HCT116 (cell line): ENCODE measurements at regions of chr4 and their contacts with region 1.

Region 1: GRCh38 chr4:53196882-53197771 is 168.7 kb downstream of the SCFD2 start:
- DNase-seq: peak; percentile 70
- ATAC-seq: peak; percentile 76
- H3K4me3 ChIP-seq: no peak overlapping the region
- H3K27ac ChIP-seq: no peak overlapping the region
- H3K4me1 ChIP-seq: no peaks in the 10 kb centered on the region
- H3K27me3 ChIP-seq: no peaks in the 10 kb centered on the region
- CTCF ChIP-seq: peak; percentile 61 to 81 (median 65); a peak in 5 of 6 replicates
- POLR2A ChIP-seq: no peak
- RAD21 ChIP-seq: peak; percentile 81

Region 2: GRCh38 chr4:53592686-53593501 is 395.8 kb after region 1 on chr4:
- CTCF ChIA-PET with region 1: no interaction called
- POLR2A ChIA-PET with region 1: no interaction called
- RAD21 ChIA-PET with region 1: no interaction called
- intact Hi-C with region 1: loop called (anchors 5 kb)
- DNase-seq: no peak
- ATAC-seq: peak; percentile 80
- H3K4me3 ChIP-seq: peak overlapping the region; percentile 38 to 55
- H3K27ac ChIP-seq: peak overlapping the region; percentile 46
- H3K4me1 ChIP-seq: peaks cover 18 to 30% of the 10 kb centered on the region in 2 experiments
- H3K27me3 ChIP-seq: no peaks in the 10 kb centered on the region
- CTCF ChIP-seq: no peak
- POLR2A ChIP-seq: no peak
- RAD21 ChIP-seq: no peak

Region 3: GRCh38 chr4:53614591-53614990 is 417.5 kb after region 1 on chr4:
- CTCF ChIA-PET with region 1: no interaction called
- POLR2A ChIA-PET with region 1: no interaction called
- RAD21 ChIA-PET with region 1: no interaction called
- intact Hi-C with region 1: loop called (anchors 10 kb)
- DNase-seq: no peak
- ATAC-seq: peak; percentile 64
- H3K4me3 ChIP-seq: no peak overlapping the region
- H3K27ac ChIP-seq: no peak overlapping the region
- H3K4me1 ChIP-seq: no peaks in the 10 kb centered on the region
- H3K27me3 ChIP-seq: 0 out of 2 replicates have a peak, but pooled peaks cover 7% of the 10 kb centered on the region
- CTCF ChIP-seq: peak in 2 of 3 experiments; percentile 32; a peak in 4 of 6 replicates
- POLR2A ChIP-seq: no peak
- RAD21 ChIP-seq: peak; percentile 15; the same call in 1 of the 2 replicates

Region 4: GRCh38 chr4:53804719-53805118 is 607.6 kb after region 1 on chr4:
- CTCF ChIA-PET with region 1: interaction called, 4 read pairs
- POLR2A ChIA-PET with region 1: no interaction called
- RAD21 ChIA-PET with region 1: no interaction called
- intact Hi-C with region 1: loop called (anchors 2 kb)
- DNase-seq: peak; percentile 24
- ATAC-seq: peak; percentile 70
- H3K4me3 ChIP-seq: no peak overlapping the region
- H3K27ac ChIP-seq: no peak overlapping the region
- H3K4me1 ChIP-seq: no peaks in the 10 kb centered on the region
- H3K27me3 ChIP-seq: peaks cover 34% of the 10 kb centered on the region
- CTCF ChIP-seq: peak; percentile 40 to 71 (median 61); a peak in 5 of 6 replicates
- POLR2A ChIP-seq: no peak
- RAD21 ChIP-seq: peak; percentile 57

Region 5: DNA sequence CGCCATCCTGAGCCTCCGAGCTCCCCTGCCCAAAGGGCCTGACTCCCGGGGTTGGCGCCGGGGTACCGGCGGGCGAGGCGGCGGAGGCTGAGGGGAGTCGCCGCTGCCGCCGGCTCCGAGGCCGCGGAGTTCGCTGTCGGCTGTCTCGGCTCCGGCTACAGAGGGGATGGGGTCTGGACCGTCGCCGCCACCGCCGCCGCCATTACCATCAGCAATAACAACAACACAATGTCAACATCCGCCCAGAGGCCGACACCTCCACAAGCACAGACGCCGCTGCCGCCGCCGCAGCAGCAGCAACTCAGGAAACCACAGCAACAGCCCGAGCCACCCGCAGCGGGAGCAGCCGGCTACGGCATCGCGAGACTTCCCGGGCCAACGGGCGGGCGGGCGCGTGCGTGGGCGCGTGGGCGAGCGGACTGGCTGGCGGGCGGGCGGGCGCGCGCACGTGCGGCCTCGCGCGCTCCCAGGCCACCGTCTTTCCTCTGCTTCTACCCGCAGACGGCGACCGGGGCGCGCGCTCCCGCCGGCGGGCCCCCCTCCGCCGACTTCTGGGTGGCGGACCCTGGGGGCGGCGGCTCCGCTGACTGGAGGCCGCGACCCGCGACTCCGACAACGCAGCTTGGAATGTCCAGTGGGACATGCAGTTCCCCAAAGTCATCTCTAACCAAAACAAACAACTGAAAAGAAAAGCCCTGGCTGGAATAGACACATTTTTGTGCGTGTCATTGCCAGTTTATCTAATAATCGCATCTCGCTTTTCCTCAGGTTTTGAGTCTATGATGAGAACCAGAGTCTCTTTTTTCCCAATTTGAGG is 867.4 kb after region 1 on chr4 and contains the start of gene CHIC2:
- CTCF ChIA-PET with region 1: no interaction called
- POLR2A ChIA-PET with region 1: no interaction called
- RAD21 ChIA-PET with region 1: no interaction called
- intact Hi-C with region 1: no loop called
- DNase-seq: peak; percentile 77
- ATAC-seq: peak; percentile 96
- H3K4me3 ChIP-seq: peak within 1 kb of the TSS; percentile 92 to 93
- H3K27ac ChIP-seq: peak within 1 kb of the TSS; percentile 72
- H3K4me1 ChIP-seq: peaks cover 13 to 34% of the 10 kb centered on the region in 2 experiments
- H3K27me3 ChIP-seq: no peaks in the 10 kb centered on the region
- CTCF ChIP-seq: no peak
- POLR2A ChIP-seq: peak; percentile 72
- RAD21 ChIP-seq: no peak
- total RNA-seq, gene CHIC2: 10.8 TPM